Activated CD4-positive, alpha-beta T cell treated with anti-CD3 and anti-CD28 coated beads for 36 hours (primary cell): ENCODE measurements at regions of chr2 and their contacts with region 1.

Region 1: DNA sequence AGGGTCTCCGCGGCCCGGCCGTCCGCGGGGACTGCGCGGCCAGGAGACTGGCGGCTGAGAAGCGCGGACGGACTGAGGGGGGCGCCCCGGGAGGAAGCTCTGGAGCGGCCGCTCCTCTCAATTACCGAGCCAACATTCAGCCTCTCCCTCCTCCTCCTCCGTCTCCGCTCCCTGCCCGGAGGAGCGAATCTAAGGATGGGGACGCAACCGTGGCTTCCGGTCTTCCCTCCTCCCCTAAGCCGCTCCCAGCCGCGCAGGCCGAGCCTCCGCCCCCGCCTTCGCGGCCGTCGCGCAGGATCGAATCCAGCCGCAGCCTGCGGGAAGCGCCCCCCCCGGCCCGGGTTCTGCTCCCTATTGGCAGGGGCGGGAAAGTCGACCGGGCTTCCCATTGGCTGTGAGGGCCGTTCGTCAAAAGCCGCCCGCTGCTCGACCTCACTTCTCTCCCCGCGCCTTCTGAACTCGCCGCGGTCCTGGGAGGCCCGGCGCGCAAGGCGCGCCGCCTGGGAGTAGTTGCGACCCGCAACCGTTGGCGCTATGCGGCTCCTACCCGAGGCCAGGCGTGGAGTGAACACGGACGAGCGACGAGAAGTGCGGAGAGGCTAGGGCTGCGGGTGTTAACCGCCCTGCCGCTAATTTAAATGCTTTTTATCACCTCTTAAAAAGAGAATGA is at the start of gene HNRNPLL:
- DNase-seq: peak; percentile 99
- ATAC-seq: peak; percentile 87
- H3K4me3 Mint-ChIP-seq: peak within 1 kb of the TSS; percentile 76
- H3K27ac Mint-ChIP-seq: peak within 1 kb of the TSS; percentile 94
- H3K4me1 Mint-ChIP-seq: peaks cover 48% of the 10 kb centered on the region
- H3K27me3 Mint-ChIP-seq: no peaks in the 10 kb centered on the region
- total RNA-seq, gene HNRNPLL: 53.5 to 59.8 TPM

Region 2: GRCh38 chr2:37698931-37699481 is 903.9 kb before region 1 on chr2:
- CTCF ChIA-PET with region 1: no interaction called
- POLR2A ChIA-PET with region 1: no interaction called
- intact Hi-C with region 1: no loop called
- DNase-seq: no peak
- ATAC-seq: no peak
- H3K4me3 Mint-ChIP-seq: no peak overlapping the region
- H3K27ac Mint-ChIP-seq: no peak overlapping the region
- H3K4me1 Mint-ChIP-seq: no peaks in the 10 kb centered on the region
- H3K27me3 Mint-ChIP-seq: no peaks in the 10 kb centered on the region

Region 3: DNA sequence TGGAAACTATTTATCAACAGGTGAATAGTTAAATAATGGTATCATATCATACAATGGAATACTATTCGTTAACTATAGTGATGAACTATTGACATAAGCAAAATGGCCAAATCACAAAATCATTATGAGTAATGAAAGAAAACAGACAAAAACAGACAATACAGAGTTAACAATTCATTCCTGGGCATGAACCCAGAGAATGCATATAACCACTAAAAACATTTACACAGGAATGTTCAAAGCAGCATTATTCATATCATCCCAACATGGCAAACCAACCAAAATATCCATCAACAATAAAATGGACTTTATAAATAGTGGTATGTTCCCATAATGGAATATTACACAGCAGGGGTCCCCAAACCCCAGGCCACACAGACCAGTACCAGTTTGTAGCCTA is 395.7 kb before region 1 on chr2:
- CTCF ChIA-PET with region 1: no interaction called
- POLR2A ChIA-PET with region 1: no interaction called
- intact Hi-C with region 1: no loop called
- DNase-seq: no peak
- ATAC-seq: no peak
- H3K4me3 Mint-ChIP-seq: no peak overlapping the region
- H3K27ac Mint-ChIP-seq: no peak overlapping the region
- H3K4me1 Mint-ChIP-seq: no peaks in the 10 kb centered on the region
- H3K27me3 Mint-ChIP-seq: peaks cover 19% of the 10 kb centered on the region

Region 4: DNA sequence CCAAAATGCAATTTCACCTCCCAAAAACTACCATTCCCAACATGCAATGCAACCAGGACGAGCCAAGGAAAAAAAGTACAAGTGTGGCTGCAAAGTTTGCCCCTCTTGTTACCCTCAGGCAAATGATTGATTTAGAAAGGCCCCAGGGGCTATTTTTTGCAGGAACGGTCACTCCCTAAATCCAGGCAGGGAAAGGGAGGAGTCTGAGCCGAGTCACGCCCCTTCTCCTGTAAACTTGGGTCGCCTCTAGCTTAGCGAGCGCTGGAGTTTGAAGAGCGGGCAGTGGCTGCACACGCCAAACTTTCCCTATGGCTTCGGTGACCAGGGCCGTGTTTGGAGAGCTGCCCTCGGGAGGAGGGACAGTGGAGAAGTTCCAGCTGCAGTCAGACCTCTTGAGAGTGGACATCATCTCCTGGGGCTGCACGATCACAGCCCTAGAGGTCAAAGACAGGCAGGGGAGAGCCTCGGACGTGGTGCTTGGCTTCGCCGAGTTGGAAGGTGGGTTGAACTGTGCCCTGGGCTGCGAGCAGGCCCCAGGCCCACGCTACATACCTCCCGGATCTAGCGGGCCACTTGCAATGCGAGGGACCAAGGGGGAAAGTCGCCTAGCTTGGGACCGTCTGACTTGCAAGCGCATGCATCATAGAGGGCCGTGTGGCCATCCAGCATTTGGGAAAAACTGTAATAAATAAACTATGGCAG is 63.1 kb after region 1 on chr2 and contains the start of gene GALM:
- CTCF ChIA-PET with region 1: interaction called, 24 read pairs
- POLR2A ChIA-PET with region 1: interaction called, 6 read pairs
- intact Hi-C with region 1: loop called (anchors 1 kb)
- DNase-seq: peak; percentile 77
- ATAC-seq: peak; percentile 32
- H3K4me3 Mint-ChIP-seq: peak within 1 kb of the TSS; percentile 89
- H3K27ac Mint-ChIP-seq: peak within 1 kb of the TSS; percentile 99
- H3K4me1 Mint-ChIP-seq: peaks cover 67% of the 10 kb centered on the region
- H3K27me3 Mint-ChIP-seq: no peaks in the 10 kb centered on the region
- total RNA-seq, gene GALM: 56.0 to 57.8 TPM

Region 5: DNA sequence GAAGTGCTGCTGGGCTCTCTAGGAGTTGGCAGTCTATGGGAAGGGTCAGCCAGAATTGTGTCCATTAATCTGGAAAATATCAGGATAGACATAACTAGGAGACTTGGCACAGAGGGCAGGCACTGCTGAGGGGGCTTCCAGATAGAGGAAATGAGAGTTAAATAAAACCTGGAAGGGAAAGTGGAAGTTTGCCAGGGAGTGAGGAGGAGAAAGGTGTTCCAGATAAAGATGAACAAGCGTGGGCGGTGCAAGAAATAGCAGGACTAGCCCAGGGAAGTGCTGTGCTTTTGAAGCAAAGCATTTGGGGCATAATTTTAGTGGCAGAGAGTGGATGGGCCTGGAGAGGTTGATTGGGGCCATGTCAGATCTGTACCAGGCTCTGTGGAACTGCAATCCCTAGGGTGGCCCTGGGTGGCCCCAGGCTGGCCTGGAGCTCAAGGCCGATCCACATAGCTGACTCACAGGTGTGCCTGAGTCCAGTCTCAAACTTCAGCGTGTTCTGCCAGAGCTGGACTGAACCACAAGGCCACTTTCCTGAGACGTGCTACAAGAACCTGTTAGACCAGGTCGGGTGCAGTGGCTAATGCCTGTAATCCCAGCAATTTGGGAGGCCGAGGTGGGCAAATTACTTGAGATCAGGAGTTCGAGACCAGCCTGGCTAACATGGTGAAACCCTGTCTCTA is 89.9 kb after region 1 on chr2:
- CTCF ChIA-PET with region 1: interaction called, 6 read pairs
- POLR2A ChIA-PET with region 1: interaction called, 3 read pairs
- intact Hi-C with region 1: loop called in 1 of 2 experiments (anchors 2 kb)
- DNase-seq: no peak
- ATAC-seq: no peak
- H3K4me3 Mint-ChIP-seq: no peak overlapping the region
- H3K27ac Mint-ChIP-seq: peak overlapping the region; percentile 71
- H3K4me1 Mint-ChIP-seq: peaks cover 67% of the 10 kb centered on the region
- H3K27me3 Mint-ChIP-seq: no peaks in the 10 kb centered on the region

Region 6: DNA sequence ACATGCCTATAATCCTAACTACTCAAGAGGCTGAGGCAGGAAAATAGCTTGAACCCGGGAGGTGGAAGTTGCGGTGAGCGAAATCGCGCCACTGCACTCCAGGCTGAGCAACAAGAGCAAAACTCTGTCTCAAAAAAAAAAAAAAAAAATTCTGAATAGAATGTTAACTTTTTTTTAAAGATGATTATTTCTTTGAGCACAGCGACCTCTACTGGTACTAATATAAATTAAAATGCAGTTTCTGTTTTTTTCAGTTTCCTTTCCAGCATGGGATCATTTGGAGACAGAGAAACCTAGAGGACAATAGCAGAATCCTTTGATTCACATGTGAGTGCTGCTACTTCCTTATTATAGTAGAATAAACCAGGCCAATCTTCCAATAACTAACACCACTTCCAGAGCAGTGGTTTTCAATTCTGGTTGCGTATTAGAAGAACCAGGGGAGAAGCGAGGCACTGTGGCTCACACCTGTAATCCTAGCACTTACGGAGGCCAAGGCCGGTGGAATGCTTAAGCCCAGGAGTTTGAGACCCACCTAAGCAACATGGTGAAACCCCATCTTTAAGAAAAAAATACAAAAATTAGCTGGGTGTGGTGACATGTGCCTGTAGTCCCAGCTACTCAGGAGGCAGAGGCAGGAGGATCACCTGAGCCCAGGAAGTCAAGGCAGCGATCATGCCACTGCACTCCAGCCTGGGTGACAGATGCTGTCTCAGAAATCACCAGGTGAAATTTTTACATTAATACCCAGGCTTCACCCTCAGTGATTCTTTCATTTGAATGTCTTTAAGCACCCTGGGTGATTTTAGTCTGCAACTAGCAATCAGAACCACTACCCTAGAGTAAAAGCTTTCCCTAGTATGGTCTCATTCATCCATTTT is 138.2 kb after region 1 on chr2:
- CTCF ChIA-PET with region 1: interaction called, 11 read pairs
- POLR2A ChIA-PET with region 1: interaction called, 11 read pairs
- intact Hi-C with region 1: no loop called
- DNase-seq: peak; percentile 39
- ATAC-seq: peak; percentile 5
- H3K4me3 Mint-ChIP-seq: no peak overlapping the region
- H3K27ac Mint-ChIP-seq: peak overlapping the region; percentile 47
- H3K4me1 Mint-ChIP-seq: peaks cover 55% of the 10 kb centered on the region
- H3K27me3 Mint-ChIP-seq: no peaks in the 10 kb centered on the region

Region 7: DNA sequence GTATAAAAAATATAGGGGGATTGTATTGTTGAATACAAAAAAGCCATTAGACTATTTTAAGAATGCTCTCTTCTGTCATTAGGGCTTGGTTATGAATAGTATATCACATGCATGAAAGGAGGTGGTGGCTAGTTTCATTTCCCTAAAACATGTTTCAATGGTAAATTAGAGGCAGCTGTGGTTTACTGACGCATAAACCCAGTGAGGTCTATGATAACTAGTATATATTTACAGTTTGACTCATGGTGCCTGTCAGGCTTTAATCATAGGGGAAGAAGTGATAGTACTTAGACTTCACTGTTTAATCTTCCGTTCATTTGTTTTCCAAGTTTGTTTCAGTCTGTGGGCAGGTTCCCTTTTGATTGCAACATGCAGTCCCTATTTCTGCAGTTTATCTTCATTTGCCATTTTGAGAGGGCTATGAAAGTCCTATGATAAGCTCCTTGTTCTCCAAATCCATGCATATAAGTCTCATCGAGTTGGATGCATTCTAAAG is 889.3 kb after region 1 on chr2:
- CTCF ChIA-PET with region 1: no interaction called
- POLR2A ChIA-PET with region 1: no interaction called
- intact Hi-C with region 1: loop called in 1 of 2 experiments (anchors 5 kb)
- DNase-seq: peak; percentile 63
- ATAC-seq: peak; percentile 95
- H3K4me3 Mint-ChIP-seq: no peak overlapping the region
- H3K27ac Mint-ChIP-seq: peak overlapping the region; percentile 53
- H3K4me1 Mint-ChIP-seq: peaks cover 44% of the 10 kb centered on the region
- H3K27me3 Mint-ChIP-seq: peaks cover 9% of the 10 kb centered on the region